Head of caudate nucleus (tissue), 42 donors: ENCODE measurements at regions of chr10 and their contacts with region 1.

Region 1: DNA sequence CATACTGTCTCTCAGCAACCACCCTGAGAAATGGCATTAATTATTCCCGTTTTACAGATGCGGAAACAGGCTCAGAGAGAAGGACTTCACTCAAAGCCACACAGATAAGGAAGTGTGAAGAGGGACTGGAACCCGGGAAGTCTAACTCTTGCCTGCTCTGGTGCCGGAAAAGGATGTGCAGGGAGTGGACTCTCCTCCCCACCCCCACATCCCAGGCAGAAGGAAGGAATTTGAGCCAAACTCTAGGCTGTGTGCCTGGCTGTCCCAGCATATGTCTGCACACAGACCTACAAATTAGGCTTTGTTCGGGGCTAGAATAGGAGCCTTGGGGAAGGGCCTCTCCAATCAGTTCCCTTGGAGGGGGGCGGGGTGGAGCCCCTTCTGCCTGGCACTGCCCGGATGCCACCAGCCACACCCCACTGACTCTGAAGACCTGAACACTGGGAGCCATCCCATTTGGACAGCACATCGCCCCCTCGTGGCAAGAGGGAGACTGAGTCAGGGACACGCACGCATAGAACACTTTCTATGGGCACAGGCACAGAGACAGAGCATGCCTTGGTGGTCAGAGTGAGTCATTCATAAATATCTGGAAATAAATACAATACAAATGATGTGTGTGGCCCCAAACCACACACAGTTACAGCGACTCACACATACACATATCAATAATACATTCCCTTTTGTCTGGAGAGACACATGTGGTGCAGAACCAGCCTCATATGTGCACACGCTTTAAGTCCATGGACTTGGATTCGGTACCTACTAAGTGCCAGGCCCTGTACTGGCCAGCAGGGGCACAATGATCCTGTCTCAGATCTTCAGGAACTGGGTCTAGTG is 13.1 kb downstream of the LZTS2 start:
- DNase-seq: peak; percentile 86 to 99 (median 96)

Region 2: DNA sequence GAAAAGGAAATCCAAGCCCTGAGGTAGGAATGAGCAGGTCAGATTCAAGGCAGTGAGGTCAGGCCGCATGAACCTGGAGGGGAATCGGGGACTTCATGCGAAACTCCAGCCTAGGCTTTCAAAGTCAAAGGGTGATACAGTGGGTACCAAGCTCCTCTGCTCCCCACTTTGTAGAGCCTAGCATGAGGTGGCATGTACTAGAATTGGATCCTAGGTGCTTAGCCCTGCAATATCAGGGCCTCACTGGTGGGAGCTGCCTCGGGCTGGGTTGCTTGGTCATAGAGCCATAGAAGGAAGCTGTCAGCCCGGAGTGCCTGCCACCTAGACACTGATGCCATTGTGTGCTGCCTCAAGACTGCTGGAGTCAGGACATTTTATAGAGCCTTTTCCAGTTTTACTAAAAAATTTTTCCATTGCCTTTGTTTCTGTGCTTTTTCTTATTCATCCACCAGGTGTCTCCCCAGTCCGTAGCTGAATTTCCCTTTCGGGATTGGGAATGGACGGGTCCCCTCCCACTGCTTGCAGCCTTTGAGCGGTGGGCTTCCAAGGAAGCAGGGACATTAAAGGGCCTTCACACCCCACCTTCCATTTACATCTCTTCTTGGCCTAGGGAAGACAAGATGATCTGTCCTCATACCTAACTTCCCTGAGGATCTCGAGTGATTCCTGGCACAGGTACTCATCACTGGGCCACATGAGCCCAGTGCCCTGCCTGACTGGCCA is 18.6 kb before region 1 on chr10:
- intact Hi-C with region 1: loop called (anchors 1 kb)
- DNase-seq: peak in 30 of 42 donors; percentile 20 to 86 (median 63)

Region 3: GRCh38 chr10:101060036-101060950 is 47.5 kb after region 1 on chr10:
- intact Hi-C with region 1: loop called (anchors 10 kb)
- DNase-seq: peak; percentile 75 to 96 (median 90)

Region 4: DNA sequence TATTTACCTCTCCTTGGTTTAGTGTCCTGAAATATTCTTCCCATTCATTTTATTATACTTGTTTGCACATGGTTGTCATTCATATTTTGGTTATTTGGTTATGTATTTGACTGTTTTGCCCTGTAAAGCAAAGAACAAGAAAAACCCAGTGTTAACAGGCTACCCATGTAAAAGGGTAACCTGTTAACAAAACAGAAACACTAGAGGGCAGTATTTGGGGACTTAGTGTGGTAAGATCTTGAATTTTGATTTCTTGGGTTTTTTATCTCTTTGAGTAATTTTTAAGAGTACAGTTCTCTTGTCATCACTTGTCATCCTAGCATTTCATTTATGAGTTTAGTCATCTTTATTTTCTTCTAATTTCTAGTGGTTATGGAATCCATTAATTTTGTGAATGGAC is 524.1 kb after region 1 on chr10:
- intact Hi-C with region 1: no loop called
- DNase-seq: no peak